ENCODE measurements at regions of chr17 and their contacts with region 1.

Region 1: DNA sequence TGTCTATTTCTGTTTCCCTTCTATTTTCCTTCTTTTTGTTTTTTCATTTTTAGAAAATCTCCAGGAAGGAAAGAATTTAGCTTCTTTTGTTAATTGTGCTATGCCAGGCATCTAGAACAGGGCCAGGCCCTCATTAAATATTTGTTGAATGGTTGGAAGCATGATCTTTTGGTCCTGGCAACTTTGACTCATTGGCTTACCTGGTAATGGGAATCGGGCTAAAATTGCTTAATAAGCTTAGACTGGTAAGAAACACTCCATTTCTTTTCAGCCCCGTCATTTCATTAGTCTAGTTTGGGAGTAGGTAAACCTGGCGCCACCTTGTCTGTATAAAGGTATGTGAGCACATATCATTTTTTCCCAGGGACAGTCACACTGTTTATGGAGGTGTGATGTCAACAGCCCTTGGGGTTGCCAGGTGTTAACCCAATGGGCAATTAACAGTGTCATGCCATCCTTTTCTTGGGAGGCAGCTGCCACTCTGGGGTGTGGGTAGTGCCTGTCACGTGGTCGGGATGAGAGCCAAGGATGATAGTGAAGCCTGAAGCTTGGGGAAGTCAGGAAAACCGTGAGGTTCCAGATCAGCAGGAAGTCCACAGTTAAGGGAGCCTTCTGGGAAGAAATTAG is 9.5 kb upstream of the NDEL1 start:
- DNase-seq: no peak
- H3K4me3 ChIP-seq: no peak overlapping the region
- H3K27ac ChIP-seq: peak overlapping the region; percentile 8 to 38
- H3K4me1 ChIP-seq: no peaks in the 10 kb centered on the region
- H3K27me3 ChIP-seq: no peaks in the 10 kb centered on the region
- CTCF ChIP-seq: no peak
- POLR2A ChIP-seq: no peak

Region 2: GRCh38 chr17:7905421-7905820 is 520.8 kb before region 1 on chr17:
- intact Hi-C with region 1: loop called (anchors 5 kb)
- DNase-seq: no peak
- H3K4me3 ChIP-seq: no peak overlapping the region
- H3K27ac ChIP-seq: no peak overlapping the region
- H3K4me1 ChIP-seq: no peaks in the 10 kb centered on the region
- H3K27me3 ChIP-seq: no peaks in the 10 kb centered on the region
- CTCF ChIP-seq: no peak
- POLR2A ChIP-seq: no peak

Measured in breast epithelium (tissue), 4 donors.